ENCODE measurements at regions of chr10 and their contacts with region 1.

Region 1: GRCh38 chr10:93816123-93816747 is 58.5 kb downstream of the LGI1 start:
- DNase-seq: peak; percentile 47
- ATAC-seq: peak; percentile 91
- H3K4me3 ChIP-seq: no peak overlapping the region
- H3K27ac ChIP-seq: no peak overlapping the region
- H3K4me1 ChIP-seq: peaks cover 6% of the 10 kb centered on the region
- H3K27me3 ChIP-seq: peaks cover 21% of the 10 kb centered on the region
- CTCF ChIP-seq: peak; percentile 65
- POLR2A ChIP-seq: no peak
- RAD21 ChIP-seq: peak; percentile 69

Region 2: GRCh38 chr10:93554760-93555432 is 261.3 kb before region 1 on chr10:
- CTCF ChIA-PET with region 1: interaction called, 3 read pairs
- POLR2A ChIA-PET with region 1: no interaction called
- dilution Hi-C with region 1: no loop called
- in situ Hi-C with region 1: no loop called
- intact Hi-C with region 1: loop called (anchors 1 kb)
- DNase-seq: peak; percentile 56
- ATAC-seq: peak; percentile 95
- H3K4me3 ChIP-seq: no peak overlapping the region
- H3K27ac ChIP-seq: no peak overlapping the region
- H3K4me1 ChIP-seq: no peaks in the 10 kb centered on the region
- H3K27me3 ChIP-seq: peaks cover 8% of the 10 kb centered on the region
- CTCF ChIP-seq: peak; percentile 65
- POLR2A ChIP-seq: no peak
- RAD21 ChIP-seq: peak; percentile 65

Region 3: DNA sequence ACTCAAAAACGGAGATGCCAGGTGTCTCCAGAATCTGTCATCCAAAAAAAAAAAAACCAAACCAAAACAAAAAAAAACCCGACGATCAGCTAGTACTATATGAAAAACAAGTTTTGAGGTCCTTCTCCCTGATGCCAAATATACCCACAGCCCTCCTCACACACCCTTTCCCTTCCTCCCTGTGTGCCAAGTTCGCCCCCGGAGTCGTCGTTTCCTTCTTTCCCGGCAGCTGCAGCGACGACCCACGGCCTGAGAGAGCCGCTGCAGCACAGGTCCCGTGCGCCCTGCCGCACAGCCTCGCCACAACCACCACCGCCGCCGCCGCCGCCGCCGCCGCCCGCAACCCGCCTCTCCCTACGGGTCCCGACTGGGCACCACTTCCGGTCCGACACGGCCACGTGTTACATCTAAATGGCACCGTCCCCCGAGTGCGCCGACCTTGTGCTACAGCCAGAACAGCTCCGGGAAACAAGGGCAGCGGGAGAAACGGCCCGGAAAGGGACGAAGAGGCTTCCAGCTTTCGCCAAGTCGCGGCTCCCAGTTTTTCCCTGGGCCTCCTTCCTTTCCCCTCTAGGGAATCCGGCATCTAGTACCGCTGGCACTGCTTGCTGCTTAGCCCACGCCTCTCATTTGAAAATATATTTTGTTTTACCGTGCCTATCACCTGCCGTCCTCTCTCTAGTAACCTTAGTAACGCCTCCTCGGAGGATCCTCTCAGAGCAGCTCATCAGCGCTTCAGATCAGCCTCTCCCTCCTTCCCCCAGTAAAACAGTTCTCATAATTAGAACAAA is 113.8 kb before region 1 on chr10 and contains the start of gene FRA10AC1:
- CTCF ChIA-PET with region 1: interaction called, 3 read pairs
- POLR2A ChIA-PET with region 1: no interaction called
- dilution Hi-C with region 1: no loop called
- in situ Hi-C with region 1: no loop called
- intact Hi-C with region 1: loop called (anchors 1 kb)
- DNase-seq: peak; percentile 92
- ATAC-seq: peak; percentile 97
- H3K4me3 ChIP-seq: peak within 1 kb of the TSS; percentile 91
- H3K27ac ChIP-seq: peak within 1 kb of the TSS; percentile 91
- H3K4me1 ChIP-seq: no peaks in the 10 kb centered on the region
- H3K27me3 ChIP-seq: peaks cover 2% of the 10 kb centered on the region; the same call in 1 of the 2 replicates
- CTCF ChIP-seq: peak; percentile 45
- POLR2A ChIP-seq: no peak
- RAD21 ChIP-seq: peak; percentile 46
- total RNA-seq, gene FRA10AC1: 1.6 and 10.6 TPM in 2 replicates

Region 4: DNA sequence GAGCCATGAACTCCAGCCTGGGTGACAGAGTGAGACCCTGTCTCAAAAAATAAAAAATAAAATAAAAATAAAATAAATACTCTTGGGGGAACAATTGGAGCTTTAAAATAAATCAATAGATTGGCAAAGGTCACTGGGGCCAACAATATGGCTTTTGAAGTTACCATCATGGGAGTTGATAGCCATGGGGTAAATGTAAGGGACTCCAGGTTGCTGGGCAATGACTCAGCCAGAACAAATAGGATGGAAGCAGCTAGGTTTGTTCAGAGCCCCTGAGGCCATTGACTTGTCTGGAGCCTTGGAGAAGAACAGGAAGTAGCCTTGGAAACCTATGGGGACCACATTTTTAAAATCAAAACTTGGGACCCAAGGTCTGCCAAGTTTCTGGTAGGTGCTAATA is 93.7 kb before region 1 on chr10:
- CTCF ChIA-PET with region 1: no interaction called
- POLR2A ChIA-PET with region 1: no interaction called
- dilution Hi-C with region 1: no loop called
- in situ Hi-C with region 1: no loop called
- intact Hi-C with region 1: no loop called
- DNase-seq: no peak
- ATAC-seq: no peak
- H3K4me3 ChIP-seq: no peak overlapping the region
- H3K27ac ChIP-seq: no peak overlapping the region
- H3K4me1 ChIP-seq: no peaks in the 10 kb centered on the region
- H3K27me3 ChIP-seq: peaks cover 9% of the 10 kb centered on the region
- CTCF ChIP-seq: no peak
- POLR2A ChIP-seq: no peak
- RAD21 ChIP-seq: no peak

Region 5: GRCh38 chr10:93745408-93746065 is 70.7 kb before region 1 on chr10:
- CTCF ChIA-PET with region 1: interaction called, 4 read pairs
- POLR2A ChIA-PET with region 1: no interaction called
- dilution Hi-C with region 1: no loop called
- in situ Hi-C with region 1: no loop called
- intact Hi-C with region 1: loop called (anchors 2 kb)
- DNase-seq: no peak
- ATAC-seq: no peak
- H3K4me3 ChIP-seq: no peak overlapping the region
- H3K27ac ChIP-seq: no peak overlapping the region
- H3K4me1 ChIP-seq: peaks cover 2% of the 10 kb centered on the region; the same call in 1 of the 2 replicates
- H3K27me3 ChIP-seq: peaks cover 5% of the 10 kb centered on the region
- CTCF ChIP-seq: peak; percentile 35
- POLR2A ChIP-seq: no peak
- RAD21 ChIP-seq: peak; percentile 37; the same call in 1 of the 2 replicates

Region 6: DNA sequence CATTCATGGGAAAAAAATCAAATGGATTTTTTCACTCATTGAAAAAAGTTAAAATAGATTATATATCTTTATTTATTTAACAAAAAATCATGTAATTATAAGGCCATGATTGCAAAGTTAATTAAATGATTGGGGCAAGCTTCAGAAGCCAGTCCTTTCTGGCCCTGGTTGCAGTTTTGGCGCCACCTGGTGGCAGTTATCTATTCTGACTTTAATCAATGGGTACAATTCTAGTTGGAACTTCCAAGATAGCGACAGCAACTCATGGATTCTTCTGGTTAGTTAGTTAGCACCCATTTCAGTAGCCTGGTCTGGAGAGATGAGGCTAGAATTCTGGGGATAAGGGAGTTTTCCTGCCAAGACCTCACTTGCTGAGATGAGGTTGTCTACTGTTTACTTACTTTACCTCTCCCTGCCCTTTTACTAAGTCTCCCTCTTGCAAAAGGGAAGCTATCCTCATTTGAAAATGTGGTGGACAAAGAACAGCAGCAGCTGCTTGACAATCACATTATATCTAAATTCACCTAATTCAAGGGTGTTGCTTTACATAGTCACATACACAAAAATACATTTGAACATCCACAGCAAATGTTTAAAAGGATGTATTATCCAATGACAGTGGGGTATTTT is 504.2 kb after region 1 on chr10:
- CTCF ChIA-PET with region 1: no interaction called
- POLR2A ChIA-PET with region 1: no interaction called
- dilution Hi-C with region 1: no loop called
- in situ Hi-C with region 1: no loop called
- intact Hi-C with region 1: loop called (anchors 1 kb)
- DNase-seq: peak; percentile 52
- ATAC-seq: peak; percentile 64
- H3K4me3 ChIP-seq: no peak overlapping the region
- H3K27ac ChIP-seq: no peak overlapping the region
- H3K4me1 ChIP-seq: peaks cover 2% of the 10 kb centered on the region; the same call in 1 of the 2 replicates
- H3K27me3 ChIP-seq: no peaks in the 10 kb centered on the region
- CTCF ChIP-seq: peak; percentile 87
- POLR2A ChIP-seq: 0 out of 2 replicates have a peak, but pooled peaks have one; percentile 30
- RAD21 ChIP-seq: peak; percentile 91